ENCODE measurements at regions of chr6 and their contacts with region 1.

Region 1: GRCh38 chr6:11232193-11232769 is at the start of gene NEDD9:
- DNase-seq: peak; percentile 82 to 94
- ATAC-seq: peak; percentile 94
- H3K4me3 ChIP-seq: peak within 1 kb of the TSS; percentile 65
- H3K27ac ChIP-seq: peak within 1 kb of the TSS; percentile 88 to 91
- H3K4me1 ChIP-seq: peaks cover 29% of the 10 kb centered on the region
- CTCF ChIP-seq: no peak
- EP300 ChIP-seq: no peak
- POLR2A ChIP-seq: peak; percentile 85
- RAD21 ChIP-seq: peak in 1 of 2 experiments; percentile 25; a peak in 2 of 5 replicates
- polyA plus RNA-seq, gene NEDD9: 79.6 and 82.5 TPM in 2 replicates

Region 2: DNA sequence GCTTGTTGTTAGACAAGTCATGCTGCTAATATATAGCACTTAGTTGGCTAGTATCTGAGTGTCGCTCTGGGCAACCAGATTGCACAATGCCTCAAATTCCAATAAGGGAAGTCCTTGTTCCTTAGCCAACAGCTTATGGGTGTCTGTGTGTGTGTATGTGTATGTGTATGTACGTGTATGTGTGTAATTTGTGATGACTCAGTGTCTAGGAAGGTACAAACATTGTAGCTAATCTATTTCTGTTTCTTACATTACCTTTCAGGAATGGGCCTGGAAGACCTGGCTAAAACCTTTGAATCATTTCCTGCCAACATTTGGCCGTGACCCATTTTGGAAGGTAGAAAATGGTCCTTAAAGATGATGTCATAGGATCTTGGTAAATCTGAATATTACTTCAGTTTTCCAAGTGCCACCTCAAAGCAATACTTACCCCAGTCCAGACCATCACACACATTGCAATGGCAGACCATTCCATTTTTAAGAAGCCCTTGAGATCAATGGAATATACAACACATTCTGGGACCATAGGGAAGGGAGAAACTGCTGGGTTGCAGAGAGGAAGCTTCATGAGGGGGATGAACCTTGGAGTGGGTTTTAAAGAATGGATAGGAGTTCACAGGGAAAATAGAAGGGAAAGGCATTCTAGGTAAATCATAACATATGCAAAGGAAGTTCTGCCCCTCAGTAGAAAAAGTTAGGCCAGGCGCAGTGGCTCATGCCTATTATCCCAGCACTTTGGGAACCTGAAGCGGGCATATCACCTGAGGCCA is 24.9 kb before region 1 on chr6:
- CTCF ChIA-PET with region 1: no interaction called
- POLR2A ChIA-PET with region 1: interaction called, 12 read pairs
- DNase-seq: peak; percentile 58 to 98
- ATAC-seq: peak; percentile 75 to 79
- H3K4me3 ChIP-seq: no peak overlapping the region
- H3K27ac ChIP-seq: peak overlapping the region; percentile 94 to 98
- H3K4me1 ChIP-seq: peaks cover 96% of the 10 kb centered on the region
- CTCF ChIP-seq: no peak
- EP300 ChIP-seq: peak; percentile 99
- POLR2A ChIP-seq: no peak
- RAD21 ChIP-seq: peak; percentile 37 to 58

Region 3: DNA sequence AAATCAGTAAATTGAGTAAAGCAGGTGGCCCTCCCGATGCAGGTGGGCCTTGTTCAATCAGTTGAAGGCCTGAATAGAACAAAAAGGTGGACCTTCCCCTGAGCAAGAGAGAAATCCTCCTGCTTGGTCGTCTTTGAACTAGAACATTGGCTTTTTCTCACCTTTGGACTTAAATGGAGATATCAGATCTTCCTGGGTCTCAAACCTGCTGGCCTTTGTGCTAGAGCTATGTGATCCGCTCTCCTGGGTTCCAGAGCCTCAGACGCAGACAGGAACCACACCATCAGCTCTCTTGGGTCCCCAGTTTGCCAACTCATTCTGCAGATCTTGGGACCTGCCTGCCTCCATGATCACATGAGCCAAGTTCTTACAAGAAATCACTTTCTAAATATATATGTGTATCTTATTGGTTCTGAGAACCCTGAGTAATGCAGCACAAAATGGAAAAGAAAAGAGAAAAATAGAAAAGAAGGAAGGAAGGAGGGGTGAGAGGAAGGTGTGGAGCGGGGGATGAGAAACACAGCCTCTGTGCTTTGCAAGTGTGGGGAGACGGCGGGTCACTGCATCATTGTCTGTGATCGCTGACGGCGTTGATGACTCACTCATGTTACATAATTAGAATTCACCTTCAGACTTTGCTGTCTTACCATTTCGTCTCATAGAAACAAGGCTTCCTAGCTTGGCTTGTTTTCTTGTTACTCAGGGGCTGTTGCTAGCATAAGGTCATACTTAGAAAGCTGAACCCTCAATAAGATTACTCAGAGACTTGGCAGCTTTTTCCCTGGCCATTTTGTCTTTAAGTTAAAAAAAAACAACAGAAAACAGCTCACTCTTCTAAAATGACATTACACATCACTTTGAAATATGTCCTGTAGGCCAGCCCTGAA is 85.8 kb after region 1 on chr6:
- CTCF ChIA-PET with region 1: no interaction called
- POLR2A ChIA-PET with region 1: interaction called, 34 read pairs
- DNase-seq: peak; percentile 85 to 96
- ATAC-seq: peak; percentile 83 to 91
- H3K4me3 ChIP-seq: no peak overlapping the region
- H3K27ac ChIP-seq: peak overlapping the region; percentile 96
- H3K4me1 ChIP-seq: peaks cover 61% of the 10 kb centered on the region
- CTCF ChIP-seq: no peak
- EP300 ChIP-seq: peak; percentile 87 to 88; a peak in 4 of 5 replicates
- POLR2A ChIP-seq: no peak
- RAD21 ChIP-seq: peak; percentile 26 to 51; a peak in 3 of 5 replicates

Region 4: DNA sequence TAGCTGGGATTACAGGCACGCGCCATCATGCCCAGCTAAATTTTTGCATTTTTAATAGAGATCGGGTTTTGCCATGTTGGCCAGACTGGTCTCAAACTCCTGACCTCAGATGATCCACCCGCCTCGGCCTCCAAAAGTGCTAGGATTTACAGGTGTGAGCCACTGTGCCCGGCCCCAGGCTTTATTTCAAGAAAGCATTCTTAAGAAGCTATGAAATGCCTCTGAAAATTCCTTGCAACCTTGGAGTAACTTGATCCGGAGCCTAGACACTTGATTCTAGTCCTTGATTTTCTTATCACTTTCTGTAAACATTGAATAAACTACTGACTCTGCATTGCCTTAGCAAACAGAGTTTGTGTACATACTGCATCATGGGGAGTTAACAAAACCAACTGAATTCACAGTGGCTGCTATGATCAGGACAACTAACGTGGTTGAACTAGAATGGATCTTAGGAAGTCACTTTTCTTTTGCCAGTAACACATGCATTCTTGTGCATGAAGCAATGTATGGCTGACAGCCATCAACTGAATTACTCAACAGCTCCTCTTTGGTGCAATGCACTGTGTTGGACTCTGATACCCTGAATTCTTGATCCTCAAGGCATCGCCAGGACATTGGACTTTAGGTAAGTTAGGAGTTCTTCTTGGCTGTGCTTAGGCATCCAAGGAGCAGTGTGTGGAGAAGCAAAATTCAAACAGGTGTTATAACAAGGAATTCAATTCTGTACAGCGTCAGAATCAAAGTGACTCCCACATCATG is 202.5 kb after region 1 on chr6:
- CTCF ChIA-PET with region 1: no interaction called
- POLR2A ChIA-PET with region 1: interaction called, 25 read pairs
- DNase-seq: peak; percentile 63 to 95
- ATAC-seq: peak; percentile 93 to 95
- H3K4me3 ChIP-seq: no peak overlapping the region
- H3K27ac ChIP-seq: peak overlapping the region; percentile 89 to 92
- H3K4me1 ChIP-seq: peaks cover 58% of the 10 kb centered on the region
- CTCF ChIP-seq: no peak
- EP300 ChIP-seq: peak; percentile 93 to 98; a peak in 4 of 5 replicates
- POLR2A ChIP-seq: no peak
- RAD21 ChIP-seq: peak; percentile 30 to 72